Heart left ventricle (tissue), 16 donors: ENCODE measurements at regions of chr3 and their contacts with region 1.

Region 1: DNA sequence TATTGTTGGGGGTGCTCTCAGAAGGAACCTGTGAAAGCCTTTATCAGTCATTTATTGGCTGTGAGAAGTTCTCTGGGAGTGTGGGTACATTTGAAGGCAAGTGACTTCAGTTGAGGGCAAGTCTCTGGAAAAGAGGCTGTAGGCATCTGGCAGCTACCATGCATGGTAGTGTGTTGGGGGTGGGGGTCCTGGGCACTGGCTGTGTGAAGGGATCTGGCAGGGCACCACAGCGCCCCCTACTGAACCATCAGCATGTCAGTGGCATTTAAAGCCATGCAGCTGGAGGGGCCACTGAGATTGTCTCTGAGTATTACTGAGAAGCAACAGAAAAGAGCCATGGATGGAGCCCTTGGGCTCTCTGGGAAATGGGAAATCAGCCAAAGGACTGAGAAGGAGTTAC is 30.6 kb downstream of the CRTAP start:
- DNase-seq: no peak
- ATAC-seq: no peak
- H3K4me3 ChIP-seq: no peak overlapping the region
- H3K27ac ChIP-seq: no peak overlapping the region
- H3K4me1 ChIP-seq: peaks cover 0 to 20% (median 0%) of the 10 kb centered on the region in 12 donors
- H3K27me3 ChIP-seq: no peaks in the 10 kb centered on the region
- CTCF ChIP-seq: peak in 4 of 12 donors; percentile 6 to 26 (median 16)
- POLR2A ChIP-seq: no peak

Region 2: GRCh38 chr3:33360136-33360825 is 215.8 kb after region 1 on chr3:
- intact Hi-C with region 1: loop called in 1 of 10 experiments (anchors 5 kb)
- DNase-seq: no peak
- ATAC-seq: no peak
- H3K4me3 ChIP-seq: no peak overlapping the region
- H3K27ac ChIP-seq: no peak overlapping the region
- H3K4me1 ChIP-seq: peaks cover 0 to 11% (median 1%) of the 10 kb centered on the region in 12 donors
- H3K27me3 ChIP-seq: no peaks in the 10 kb centered on the region
- CTCF ChIP-seq: no peak
- POLR2A ChIP-seq: no peak

Region 3: GRCh38 chr3:33372218-33373081 is 228.0 kb after region 1 on chr3:
- intact Hi-C with region 1: loop called in 1 of 10 experiments (anchors 5 kb)
- DNase-seq: no peak
- ATAC-seq: peak in 3 of 4 donors; percentile 59 to 74 (median 66)
- H3K4me3 ChIP-seq: no peak overlapping the region
- H3K27ac ChIP-seq: no peak overlapping the region
- H3K4me1 ChIP-seq: peaks cover 0 to 9% (median 0%) of the 10 kb centered on the region in 12 donors
- H3K27me3 ChIP-seq: no peaks in the 10 kb centered on the region
- CTCF ChIP-seq: peak; percentile 84 to 93 (median 90)
- POLR2A ChIP-seq: no peak